ENCODE measurements at regions of chr14 and their contacts with region 1.

Region 1: DNA sequence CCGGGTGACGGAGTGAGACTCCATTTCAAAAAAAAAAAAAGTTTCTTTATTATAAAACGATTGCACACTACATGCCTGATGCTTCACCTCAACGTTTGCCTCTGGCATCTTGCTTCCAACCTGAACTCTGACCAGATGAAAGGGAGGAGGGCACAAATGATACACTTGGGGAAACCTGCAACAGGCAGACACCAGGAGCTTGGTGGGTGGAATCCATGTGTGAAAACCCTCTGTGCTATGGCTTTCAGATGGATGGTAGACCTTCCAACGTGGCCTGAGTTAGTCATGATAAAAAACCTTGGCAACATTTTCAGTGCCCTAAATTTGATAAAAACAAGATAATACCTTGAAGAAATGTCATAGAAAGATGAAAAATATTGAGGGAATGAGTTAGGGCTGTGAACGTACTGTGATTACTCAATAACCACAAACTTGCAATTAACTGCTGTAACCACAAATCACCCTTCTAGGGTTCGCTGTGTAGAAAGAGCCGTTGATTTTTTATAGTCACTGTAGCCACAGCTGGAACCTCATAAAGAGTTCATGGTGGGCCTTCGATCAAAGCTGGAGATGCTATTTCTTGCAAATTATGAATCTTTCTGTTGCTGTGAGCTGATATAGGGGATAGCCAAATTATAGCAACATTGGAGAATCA is 26.1 kb upstream of the GZMB start:
- DNase-seq: no peak
- CTCF ChIP-seq: no peak

Region 2: GRCh38 chr14:24705840-24706239 is 45.8 kb after region 1 on chr14:
- CTCF ChIA-PET with region 1: no interaction called
- POLR2A ChIA-PET with region 1: no interaction called
- DNase-seq: peak; percentile 65
- CTCF ChIP-seq: no peak

Region 3: DNA sequence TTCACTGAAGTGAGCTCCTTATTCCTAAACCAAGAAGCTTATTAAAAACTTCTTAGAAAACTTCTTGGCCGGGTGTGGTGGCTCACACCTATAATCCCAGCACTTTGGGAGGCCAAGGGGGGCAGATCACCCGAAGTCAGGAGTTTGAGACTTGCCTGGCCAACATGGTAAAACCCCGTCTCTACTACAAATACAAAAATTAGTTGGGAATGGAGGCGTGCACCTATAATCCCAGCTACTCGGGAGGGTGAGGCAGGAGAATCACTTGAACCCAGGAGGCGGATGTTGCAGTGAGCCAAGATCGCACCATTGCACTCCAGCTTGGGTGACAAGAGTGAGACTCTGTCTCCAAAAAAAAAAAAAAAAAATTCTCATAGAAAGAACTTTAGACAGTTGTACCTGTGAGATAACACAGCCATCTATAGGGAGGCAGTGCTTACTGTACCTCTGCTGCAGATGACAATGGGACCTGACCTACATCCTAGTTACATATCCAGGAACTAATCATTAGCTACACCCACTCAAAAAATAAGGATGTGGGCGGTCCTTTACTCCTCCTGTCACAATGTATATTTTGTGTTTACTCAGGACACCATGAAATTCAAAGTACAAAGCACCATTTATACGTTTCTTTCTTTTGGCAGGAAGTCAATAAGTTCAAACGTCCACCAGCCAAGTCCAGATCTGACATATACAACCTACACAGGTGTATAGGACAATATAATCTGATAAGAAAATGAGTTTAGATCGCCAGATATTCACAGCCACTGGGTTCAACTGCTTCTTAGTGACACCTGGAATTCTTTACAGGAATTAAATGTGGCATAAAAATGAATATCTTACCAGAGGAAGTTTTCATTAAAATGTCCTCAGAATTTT is 375.0 kb after region 1 on chr14:
- CTCF ChIA-PET with region 1: no interaction called
- POLR2A ChIA-PET with region 1: interaction called, 12 read pairs
- DNase-seq: no peak
- CTCF ChIP-seq: no peak

Measured in GM10248 (cell line).